ENCODE measurements at regions of chr6 and their contacts with region 1.

Region 1: DNA sequence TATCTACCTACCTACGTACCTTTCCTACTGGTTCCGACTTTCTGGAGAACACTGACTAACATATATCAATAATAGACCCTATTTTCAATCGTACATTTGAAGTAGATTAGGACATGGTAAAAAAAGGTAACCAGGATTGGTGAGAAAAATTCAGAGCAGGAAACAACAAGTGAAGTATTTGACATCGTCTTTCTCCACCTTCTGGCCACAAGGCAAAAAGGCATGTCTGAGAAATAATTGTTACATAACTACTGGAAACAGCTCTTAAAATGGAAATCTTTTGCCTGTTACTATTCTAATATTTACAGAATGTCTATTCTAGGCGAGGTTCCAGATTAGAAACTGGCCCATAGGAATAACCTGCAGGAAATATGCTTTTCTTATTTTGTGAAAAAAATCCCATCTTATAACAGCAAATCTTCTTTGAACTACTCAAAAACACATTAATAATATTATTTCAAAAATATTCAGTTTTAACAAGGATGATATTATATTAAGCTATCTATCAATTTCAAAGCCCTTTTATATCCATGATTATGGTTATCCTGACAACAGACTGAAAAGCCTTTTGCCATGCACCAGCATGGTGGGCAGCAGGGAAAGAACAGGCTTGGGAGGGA is 80.8 kb downstream of the RCAN2 start:
- DNase-seq: peak in 1 of 2 donors; percentile 13
- ATAC-seq: peak; percentile 68

Region 2: GRCh38 chr6:46090115-46091079 is 320.0 kb before region 1 on chr6:
- intact Hi-C with region 1: loop called in 1 of 2 experiments (anchors 5 kb)
- DNase-seq: peak; percentile 47 to 61
- ATAC-seq: peak; percentile 81

Region 3: DNA sequence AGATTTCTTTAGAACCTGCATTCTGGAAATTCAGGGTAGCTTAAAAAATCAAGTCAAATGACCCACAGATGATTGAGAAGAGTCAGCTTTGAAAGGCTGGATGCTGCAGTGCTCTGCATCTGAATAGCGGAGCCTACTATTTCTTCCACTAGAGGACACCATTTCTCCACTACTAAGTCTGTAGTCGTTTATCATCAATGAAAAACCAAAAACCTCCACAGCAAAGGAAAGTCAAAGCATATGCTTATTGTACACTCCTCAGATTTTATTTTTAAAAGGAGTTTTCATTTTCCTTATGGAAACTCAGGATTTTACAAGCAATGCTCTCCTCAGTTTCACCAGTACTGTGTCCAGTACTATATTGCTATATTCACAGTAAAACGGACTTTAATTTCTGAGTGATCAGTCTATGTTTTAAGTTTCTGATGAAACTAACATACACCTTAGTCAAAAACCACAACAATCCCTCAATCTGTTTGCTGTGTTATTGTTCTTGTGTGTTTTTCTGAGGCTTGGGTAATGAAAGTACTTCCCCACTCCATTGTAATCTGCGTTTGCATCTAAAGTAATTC is 189.1 kb before region 1 on chr6:
- intact Hi-C with region 1: loop called in 1 of 2 experiments (anchors 2 kb)
- DNase-seq: no peak
- ATAC-seq: peak; percentile 90